WTC11 (cell line): ENCODE measurements at regions of chr15 and their contacts with region 1.

Region 1: DNA sequence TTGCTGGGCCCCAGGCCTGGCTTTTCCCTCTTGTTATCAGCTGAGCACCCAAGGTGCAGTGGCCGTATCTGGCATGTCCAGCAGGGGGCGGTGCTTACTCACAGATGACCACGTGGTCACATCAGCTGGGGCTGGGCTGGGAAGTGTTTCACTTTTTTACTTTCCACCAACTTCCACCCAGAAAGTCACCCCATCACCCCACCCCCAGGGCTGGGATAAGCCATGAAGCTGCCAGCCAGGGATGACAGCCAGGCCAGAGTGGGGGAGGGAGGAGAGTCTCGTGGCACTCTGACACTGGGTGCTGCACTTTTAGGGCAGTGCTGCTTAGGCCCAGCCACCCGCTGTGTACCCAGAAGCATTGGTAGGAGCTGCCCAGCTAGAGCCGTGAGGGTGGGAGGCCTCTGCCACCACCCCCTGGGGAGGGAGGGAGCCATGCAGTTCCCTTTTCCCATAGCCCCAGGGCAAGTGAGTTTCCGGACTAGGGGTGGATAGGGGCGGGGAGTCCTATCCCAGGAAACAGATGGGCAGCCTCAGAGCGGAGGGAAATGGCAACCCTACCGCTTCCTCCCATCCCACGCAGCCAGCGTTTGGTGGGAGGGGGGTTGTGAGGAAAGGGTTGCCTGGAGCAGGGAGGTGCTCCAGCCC is 6.1 kb downstream of the PPCDC start:
- DNase-seq: peak; percentile 94
- ATAC-seq: peak; percentile 84
- H3K4me3 Mint-ChIP-seq: no peak overlapping the region
- H3K27ac Mint-ChIP-seq: peak overlapping the region; percentile 90; the same call in 1 of the 2 replicates
- H3K4me1 Mint-ChIP-seq: peaks cover 52% of the 10 kb centered on the region
- H3K27me3 Mint-ChIP-seq: no peaks in the 10 kb centered on the region
- CTCF ChIP-seq: peak; percentile 94

Region 2: GRCh38 chr15:74895830-74896229 is 133.7 kb before region 1 on chr15:
- CTCF ChIA-PET with region 1: no interaction called
- POLR2A ChIA-PET with region 1: no interaction called
- DNase-seq: no peak
- ATAC-seq: no peak
- H3K4me3 Mint-ChIP-seq: no peak overlapping the region
- H3K27ac Mint-ChIP-seq: no peak overlapping the region
- H3K4me1 Mint-ChIP-seq: peaks cover 2% of the 10 kb centered on the region
- H3K27me3 Mint-ChIP-seq: no peaks in the 10 kb centered on the region
- CTCF ChIP-seq: no peak

Region 3: DNA sequence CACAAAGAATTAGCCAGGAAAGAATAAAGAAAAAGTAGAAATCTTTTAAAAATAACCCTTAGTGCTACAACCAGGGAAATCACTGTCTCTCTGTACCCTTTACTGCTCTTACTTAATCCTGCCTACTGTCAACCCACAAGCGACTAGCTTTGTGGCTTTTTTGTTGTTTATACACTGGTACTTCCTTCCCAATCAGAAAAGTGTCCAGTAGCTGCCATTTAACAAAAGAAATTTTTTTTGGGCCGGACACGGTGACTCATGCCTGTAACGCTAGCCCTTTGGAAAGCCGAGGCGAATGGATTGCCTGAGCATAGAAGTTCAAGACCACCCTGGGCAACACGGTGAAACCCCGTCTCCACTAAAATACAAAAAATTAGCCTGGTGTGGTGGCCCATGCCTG is 109.0 kb before region 1 on chr15:
- CTCF ChIA-PET with region 1: no interaction called
- POLR2A ChIA-PET with region 1: no interaction called
- DNase-seq: no peak
- ATAC-seq: no peak
- H3K4me3 Mint-ChIP-seq: no peak overlapping the region
- H3K27ac Mint-ChIP-seq: no peak overlapping the region
- H3K4me1 Mint-ChIP-seq: no peaks in the 10 kb centered on the region
- H3K27me3 Mint-ChIP-seq: no peaks in the 10 kb centered on the region
- CTCF ChIP-seq: no peak

Region 4: GRCh38 chr15:74995241-74995778 is 34.2 kb before region 1 on chr15 and contains the start of gene SCAMP5:
- CTCF ChIA-PET with region 1: interaction called, 11 read pairs
- POLR2A ChIA-PET with region 1: interaction called, 3 read pairs
- DNase-seq: peak; percentile 99
- ATAC-seq: peak; percentile 88
- H3K4me3 Mint-ChIP-seq: peak within 1 kb of the TSS; percentile 79
- H3K27ac Mint-ChIP-seq: no peak within 1 kb of the TSS
- H3K4me1 Mint-ChIP-seq: peaks cover 20% of the 10 kb centered on the region
- H3K27me3 Mint-ChIP-seq: peaks cover 22% of the 10 kb centered on the region
- CTCF ChIP-seq: no peak
- total RNA-seq, gene SCAMP5: 65.7 to 70.1 TPM (median 67.0 TPM) in 3 replicates

Region 5: GRCh38 chr15:75065467-75065850 is 36.0 kb after region 1 on chr15:
- CTCF ChIA-PET with region 1: interaction called, 10 read pairs
- POLR2A ChIA-PET with region 1: no interaction called
- DNase-seq: no peak
- ATAC-seq: peak; percentile 30; the same call in 1 of the 2 replicates
- H3K4me3 Mint-ChIP-seq: no peak overlapping the region
- H3K27ac Mint-ChIP-seq: no peak overlapping the region
- H3K4me1 Mint-ChIP-seq: peaks cover 19% of the 10 kb centered on the region
- H3K27me3 Mint-ChIP-seq: peaks cover 10% of the 10 kb centered on the region
- CTCF ChIP-seq: no peak

Region 6: GRCh38 chr15:75195122-75195765 is 165.7 kb after region 1 on chr15:
- CTCF ChIA-PET with region 1: interaction called, 51 read pairs
- POLR2A ChIA-PET with region 1: no interaction called
- DNase-seq: peak; percentile 84
- ATAC-seq: peak; percentile 88
- H3K4me3 Mint-ChIP-seq: peak overlapping the region; percentile 20; the same call in 1 of the 2 replicates
- H3K27ac Mint-ChIP-seq: no peak overlapping the region
- H3K4me1 Mint-ChIP-seq: peaks cover 42% of the 10 kb centered on the region
- H3K27me3 Mint-ChIP-seq: peaks cover 3% of the 10 kb centered on the region
- CTCF ChIP-seq: no peak

Region 7: GRCh38 chr15:75302318-75302717 is 272.8 kb after region 1 on chr15:
- CTCF ChIA-PET with region 1: interaction called, 25 read pairs
- POLR2A ChIA-PET with region 1: no interaction called
- DNase-seq: no peak
- ATAC-seq: no peak
- H3K4me3 Mint-ChIP-seq: no peak overlapping the region
- H3K27ac Mint-ChIP-seq: no peak overlapping the region
- H3K4me1 Mint-ChIP-seq: peaks cover 4% of the 10 kb centered on the region
- H3K27me3 Mint-ChIP-seq: peaks cover 7% of the 10 kb centered on the region; the same call in 1 of the 2 replicates
- CTCF ChIP-seq: no peak